Dorsolateral prefrontal cortex (tissue), 120 donors: ENCODE measurements at regions of chr9 and their contacts with region 1.

Region 1: DNA sequence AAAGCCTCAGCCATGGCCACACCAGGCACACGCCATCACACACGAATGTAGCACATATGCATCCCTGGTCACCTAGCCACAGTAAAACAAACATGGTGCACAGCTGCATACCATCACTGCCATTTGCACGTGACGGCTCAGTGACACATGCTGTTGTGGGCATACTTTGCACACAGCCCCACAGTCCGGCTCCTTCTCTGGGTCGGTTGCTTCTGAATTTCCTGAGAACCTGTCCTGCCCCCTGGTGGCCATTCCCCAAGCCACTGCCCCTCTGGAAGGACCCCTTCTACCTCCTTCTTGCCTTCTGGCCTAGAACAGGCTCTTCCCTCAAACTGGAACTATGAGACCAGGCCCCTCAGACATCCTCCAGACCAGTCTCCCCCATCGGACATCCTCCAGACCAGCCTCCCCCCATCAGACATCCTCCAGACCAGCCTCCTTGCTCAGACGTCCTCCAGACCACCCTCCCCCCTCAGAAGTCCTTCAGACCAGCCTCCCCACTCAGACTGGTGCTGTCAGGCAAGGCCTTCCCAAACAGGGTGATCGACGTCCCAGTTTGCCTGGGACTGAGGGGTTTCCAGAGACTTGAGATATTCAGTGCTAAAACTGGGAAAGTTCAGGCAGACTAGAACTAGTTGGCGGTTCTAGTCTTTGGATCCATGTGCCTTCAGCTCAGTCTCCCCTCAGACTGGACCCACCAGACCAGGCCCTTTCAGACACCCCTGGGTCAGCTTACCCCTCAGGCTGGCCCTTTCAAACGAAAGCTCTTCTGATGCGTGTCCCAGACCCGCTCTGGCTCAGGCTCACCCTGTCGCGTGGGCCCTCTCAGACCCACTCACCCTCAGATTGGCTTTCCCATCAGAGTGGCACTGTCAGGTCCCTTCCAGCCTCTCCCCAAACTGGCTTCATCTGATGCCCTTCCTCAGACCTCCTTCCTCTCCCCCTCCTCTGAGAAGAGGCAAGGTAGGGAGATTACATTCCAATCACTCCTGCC is 24.3 kb upstream of the ENHO start:
- DNase-seq: peak; percentile 70 to 84 (median 78)
- H3K4me3 ChIP-seq: no peak overlapping the region
- H3K27ac ChIP-seq: peak overlapping the region in 26 of 59 donors; percentile 1 to 71 (median 32)
- H3K27me3 ChIP-seq: no peaks in the 10 kb centered on the region
- CTCF ChIP-seq: peak; percentile 31 to 92 (median 82)

Region 2: GRCh38 chr9:34328987-34329832 is 217.9 kb before region 1 on chr9 and contains the starts of genes KIF24 and NUDT2:
- intact Hi-C with region 1: loop called in 1 of 2 experiments (anchors 5 kb)
- DNase-seq: peak; percentile 95 to 99 (median 98)
- H3K4me3 ChIP-seq: peak within 1 kb of the TSS; percentile 60 to 99 (median 85)
- H3K27ac ChIP-seq: peak within 1 kb of the TSS; percentile 80 to 98 (median 93)
- H3K27me3 ChIP-seq: no peaks in the 10 kb centered on the region
- CTCF ChIP-seq: peak in 29 of 56 donors; percentile 4 to 51 (median 19)
- total RNA-seq, gene KIF24: 0.61 to 3.8 (median 1.6) TPM
- total RNA-seq, gene NUDT2: 9.9 to 32.0 (median 20.6) TPM

Region 3: DNA sequence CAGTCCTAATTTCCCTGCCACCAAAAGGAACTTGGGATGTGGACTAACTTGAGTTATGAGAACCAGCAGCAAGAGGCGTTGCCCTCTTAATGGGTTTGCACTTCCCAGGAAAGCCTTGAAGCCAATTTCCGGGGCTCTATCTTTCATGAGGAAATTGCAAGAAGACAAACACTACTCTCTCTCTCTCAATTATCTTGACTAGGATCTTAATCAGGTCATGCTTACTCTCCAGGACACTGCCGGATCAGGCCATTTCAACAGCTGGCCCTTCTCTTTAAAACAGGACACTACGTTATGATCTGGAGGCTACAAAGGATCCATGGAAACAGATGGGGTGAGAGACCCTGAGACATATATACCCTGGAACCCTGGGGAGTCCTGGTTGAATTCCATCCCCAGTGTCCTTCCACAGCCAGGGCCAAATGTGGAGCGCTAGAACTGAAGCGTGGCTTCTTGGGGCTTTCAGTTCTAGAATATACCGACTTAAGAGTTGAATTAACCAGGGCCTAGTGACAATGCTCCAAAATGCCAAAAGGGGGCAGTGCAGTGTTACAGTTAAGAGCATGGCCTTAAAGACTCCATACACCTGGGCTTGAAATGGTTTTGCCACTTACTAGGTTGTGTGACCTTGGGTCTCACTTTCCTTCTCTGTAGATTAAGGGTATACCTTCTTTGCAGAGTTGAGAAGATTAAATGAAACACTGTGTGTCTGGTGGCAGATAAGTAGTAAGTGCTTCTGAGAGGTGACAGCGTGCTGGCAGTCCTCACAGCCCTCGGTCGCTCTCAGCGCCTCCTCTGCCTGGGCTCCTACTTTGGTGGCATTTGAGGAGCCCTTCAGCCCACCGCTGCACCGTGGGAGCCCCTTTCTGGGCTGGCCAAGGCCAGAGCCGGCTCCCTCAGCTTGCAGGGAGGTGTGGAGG is 109.9 kb before region 1 on chr9:
- intact Hi-C with region 1: loop called in 1 of 2 experiments (anchors 2 kb)
- DNase-seq: peak in 6 of 10 donors; percentile 38 to 70 (median 42)
- H3K4me3 ChIP-seq: no peak overlapping the region
- H3K27ac ChIP-seq: peak overlapping the region in 3 of 59 donors; percentile 25 to 79 (median 60)
- H3K27me3 ChIP-seq: no peaks in the 10 kb centered on the region
- CTCF ChIP-seq: peak in 55 of 56 donors; percentile 43 to 84 (median 73)

Region 4: GRCh38 chr9:34500623-34501267 is 46.4 kb before region 1 on chr9:
- intact Hi-C with region 1: loop called (anchors 1 kb)
- DNase-seq: peak; percentile 48 to 83 (median 68)
- H3K4me3 ChIP-seq: no peak overlapping the region
- H3K27ac ChIP-seq: peak overlapping the region in 20 of 59 donors; percentile 69 to 90 (median 86)
- H3K27me3 ChIP-seq: no peaks in the 10 kb centered on the region
- CTCF ChIP-seq: peak; percentile 94 to 100 (median 99)

Region 5: GRCh38 chr9:34591248-34591916 is 44.3 kb after region 1 on chr9:
- intact Hi-C with region 1: loop called (anchors 1 kb)
- DNase-seq: peak; percentile 77 to 93 (median 86)
- H3K4me3 ChIP-seq: peak overlapping the region in 49 of 59 donors; percentile 1 to 78 (median 59)
- H3K27ac ChIP-seq: peak overlapping the region in 42 of 59 donors; percentile 6 to 90 (median 80)
- H3K27me3 ChIP-seq: peaks cover 0 to 4% (median 0%) of the 10 kb centered on the region in 45 donors
- CTCF ChIP-seq: peak; percentile 67 to 98 (median 95)